ENCODE measurements at regions of chr18 and their contacts with region 1.

Region 1: DNA sequence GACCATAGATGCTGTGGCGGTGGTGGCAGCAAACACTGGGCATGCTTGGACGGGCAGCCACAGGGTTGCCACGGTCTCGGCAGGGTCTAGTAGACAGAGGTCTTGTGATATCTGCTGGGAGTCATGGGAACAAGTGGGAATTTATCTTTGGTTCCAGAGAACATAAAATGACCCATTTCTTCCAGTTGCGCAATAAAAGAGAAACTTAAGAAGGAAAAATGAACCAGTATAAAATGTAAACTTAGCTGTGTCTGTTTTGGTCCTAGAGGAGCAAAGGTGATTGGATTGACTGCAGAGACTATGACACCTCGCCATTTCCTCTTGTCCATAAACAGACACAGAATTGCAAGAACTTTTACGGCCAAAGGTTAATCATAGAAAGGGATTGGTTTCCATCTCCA is 132.6 kb upstream of the RBBP8 start:
- DNase-seq: no peak
- ATAC-seq: no peak
- H3K4me3 Mint-ChIP-seq: no peak overlapping the region
- H3K27ac Mint-ChIP-seq: no peak overlapping the region
- H3K4me1 Mint-ChIP-seq: no peaks in the 10 kb centered on the region
- H3K27me3 Mint-ChIP-seq: peaks cover 7% of the 10 kb centered on the region
- CTCF ChIP-seq: no peak

Region 2: DNA sequence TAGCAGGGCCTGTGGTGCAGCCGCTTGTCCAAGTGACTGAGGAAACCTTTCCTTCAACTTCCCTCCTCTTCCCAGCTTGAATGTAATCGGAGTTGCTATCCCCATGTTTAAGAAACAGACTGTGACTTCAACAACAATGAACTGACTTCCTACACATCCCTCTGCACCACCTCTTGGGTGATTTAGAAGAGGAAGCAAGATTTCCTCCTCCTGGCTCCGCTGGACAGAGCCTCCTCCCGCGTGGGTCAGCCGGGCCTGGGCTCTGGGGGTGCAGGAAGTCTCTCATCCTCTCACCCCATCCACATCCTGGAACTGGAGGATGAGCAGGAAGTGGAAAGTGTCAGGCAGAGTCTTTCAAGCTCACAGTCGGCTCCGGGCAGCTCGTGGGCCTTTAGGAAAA is 546.9 kb before region 1 on chr18:
- CTCF ChIA-PET with region 1: no interaction called
- POLR2A ChIA-PET with region 1: no interaction called
- intact Hi-C with region 1: no loop called
- DNase-seq: no peak
- ATAC-seq: no peak
- H3K4me3 Mint-ChIP-seq: no peak overlapping the region
- H3K27ac Mint-ChIP-seq: no peak overlapping the region
- H3K4me1 Mint-ChIP-seq: no peaks in the 10 kb centered on the region
- H3K27me3 Mint-ChIP-seq: peaks cover 5% of the 10 kb centered on the region
- CTCF ChIP-seq: no peak

Region 3: DNA sequence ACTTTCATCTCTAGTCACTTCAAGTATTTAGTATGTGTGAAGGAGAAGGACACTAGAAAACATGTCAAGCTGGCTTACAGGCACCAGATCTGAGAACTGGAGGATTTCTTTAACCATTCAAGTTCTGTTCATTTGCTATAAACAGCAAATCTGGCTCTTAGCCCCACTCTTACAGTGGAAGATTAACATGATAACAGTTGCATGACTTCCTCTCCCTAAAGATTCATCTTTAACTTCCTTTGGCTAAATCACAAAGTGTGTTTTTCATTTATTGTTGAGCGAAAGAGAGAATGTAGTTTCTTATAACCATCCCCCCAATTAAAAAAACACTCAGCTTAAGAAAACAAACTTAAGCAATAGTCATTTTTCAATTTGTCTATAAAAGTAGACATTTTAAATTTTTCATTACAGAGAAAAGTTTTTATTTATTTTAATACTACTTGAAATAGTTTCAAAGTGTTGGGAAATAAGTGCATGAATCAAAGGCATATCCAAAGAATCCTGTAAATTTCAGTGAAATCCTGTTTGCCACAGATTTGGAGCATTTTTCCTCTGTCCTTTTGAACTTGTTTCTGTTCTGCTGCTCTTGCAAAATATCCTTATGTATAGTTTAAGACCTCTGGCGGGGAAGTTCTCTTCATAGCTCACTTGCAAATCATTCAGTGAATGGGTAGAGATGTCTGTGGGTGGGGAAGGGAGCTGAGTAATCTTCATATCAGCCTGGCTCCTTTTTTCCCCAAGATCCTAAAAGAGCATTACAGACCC is 108.4 kb before region 1 on chr18:
- CTCF ChIA-PET with region 1: no interaction called
- POLR2A ChIA-PET with region 1: no interaction called
- intact Hi-C with region 1: no loop called
- DNase-seq: no peak
- ATAC-seq: no peak
- H3K4me3 Mint-ChIP-seq: no peak overlapping the region
- H3K27ac Mint-ChIP-seq: no peak overlapping the region
- H3K4me1 Mint-ChIP-seq: no peaks in the 10 kb centered on the region
- H3K27me3 Mint-ChIP-seq: no peaks in the 10 kb centered on the region
- CTCF ChIP-seq: no peak

Region 4: GRCh38 chr18:22826726-22827125 is 26.2 kb after region 1 on chr18:
- CTCF ChIA-PET with region 1: no interaction called
- POLR2A ChIA-PET with region 1: no interaction called
- intact Hi-C with region 1: no loop called
- DNase-seq: no peak
- ATAC-seq: no peak
- H3K4me3 Mint-ChIP-seq: no peak overlapping the region
- H3K27ac Mint-ChIP-seq: no peak overlapping the region
- H3K4me1 Mint-ChIP-seq: peaks cover 4% of the 10 kb centered on the region
- H3K27me3 Mint-ChIP-seq: peaks cover 2% of the 10 kb centered on the region
- CTCF ChIP-seq: no peak

Region 5: GRCh38 chr18:22983175-22983574 is 182.6 kb after region 1 on chr18:
- CTCF ChIA-PET with region 1: interaction called, 38 read pairs
- POLR2A ChIA-PET with region 1: interaction called, 8 read pairs
- intact Hi-C with region 1: loop called (anchors 1 kb)
- DNase-seq: no peak
- ATAC-seq: no peak
- H3K4me3 Mint-ChIP-seq: no peak overlapping the region
- H3K27ac Mint-ChIP-seq: no peak overlapping the region
- H3K4me1 Mint-ChIP-seq: peaks cover 34% of the 10 kb centered on the region
- H3K27me3 Mint-ChIP-seq: no peaks in the 10 kb centered on the region
- CTCF ChIP-seq: no peak

Region 6: DNA sequence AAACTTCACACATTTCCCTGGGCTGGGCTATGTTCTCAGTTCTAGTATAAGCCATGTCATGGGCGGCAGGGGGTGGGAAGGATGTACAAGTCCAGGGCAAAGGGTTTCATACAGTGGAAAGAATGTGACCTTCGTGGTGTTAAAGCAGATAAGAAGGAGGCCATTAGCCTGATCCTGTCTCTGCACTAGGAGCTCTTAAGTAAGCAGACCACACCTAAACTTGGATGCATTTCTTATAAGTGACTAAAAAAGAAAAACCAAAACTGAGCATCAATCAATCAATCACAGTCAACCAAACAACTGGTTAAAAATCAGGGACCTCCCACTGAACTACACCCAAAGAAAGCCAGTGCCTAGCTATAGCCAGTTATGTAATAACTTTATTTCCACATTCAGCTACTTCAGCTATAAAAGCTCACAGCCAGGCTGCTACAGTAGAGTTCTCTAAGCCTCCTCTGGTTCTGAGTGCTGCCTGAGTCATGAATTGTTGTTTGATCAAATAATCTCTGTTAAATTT is 605.8 kb after region 1 on chr18:
- CTCF ChIA-PET with region 1: interaction called, 46 read pairs
- POLR2A ChIA-PET with region 1: no interaction called
- intact Hi-C with region 1: loop called (anchors 1 kb)
- DNase-seq: no peak
- ATAC-seq: no peak
- H3K4me3 Mint-ChIP-seq: no peak overlapping the region
- H3K27ac Mint-ChIP-seq: no peak overlapping the region
- H3K4me1 Mint-ChIP-seq: no peaks in the 10 kb centered on the region
- H3K27me3 Mint-ChIP-seq: no peaks in the 10 kb centered on the region
- CTCF ChIP-seq: no peak

Region 7: GRCh38 chr18:23586249-23587196 is 786.0 kb after region 1 on chr18 and contains the start of gene NPC1:
- CTCF ChIA-PET with region 1: no interaction called
- POLR2A ChIA-PET with region 1: no interaction called
- intact Hi-C with region 1: loop called (anchors 1 kb)
- DNase-seq: peak; percentile 94
- ATAC-seq: peak; percentile 88
- H3K4me3 Mint-ChIP-seq: peak within 1 kb of the TSS; percentile 91
- H3K27ac Mint-ChIP-seq: peak within 1 kb of the TSS; percentile 95
- H3K4me1 Mint-ChIP-seq: peaks cover 31% of the 10 kb centered on the region
- H3K27me3 Mint-ChIP-seq: no peaks in the 10 kb centered on the region
- CTCF ChIP-seq: peak; percentile 39
- total RNA-seq, gene NPC1: 31.9 and 36.5 TPM in 2 replicates

Region 8: GRCh38 chr18:23629444-23629946 is 828.9 kb after region 1 on chr18:
- CTCF ChIA-PET with region 1: no interaction called
- POLR2A ChIA-PET with region 1: no interaction called
- intact Hi-C with region 1: no loop called
- DNase-seq: no peak
- ATAC-seq: no peak
- H3K4me3 Mint-ChIP-seq: no peak overlapping the region
- H3K27ac Mint-ChIP-seq: no peak overlapping the region
- H3K4me1 Mint-ChIP-seq: no peaks in the 10 kb centered on the region
- H3K27me3 Mint-ChIP-seq: peaks cover 3% of the 10 kb centered on the region
- CTCF ChIP-seq: no peak

Measured in activated B cell treated with CpG ODN at 0.5 μM for 24 hours (primary cell).